Left cardiac atrium (tissue), 4 donors: ENCODE measurements at regions of chr11 and their contacts with region 1.

Region 1: DNA sequence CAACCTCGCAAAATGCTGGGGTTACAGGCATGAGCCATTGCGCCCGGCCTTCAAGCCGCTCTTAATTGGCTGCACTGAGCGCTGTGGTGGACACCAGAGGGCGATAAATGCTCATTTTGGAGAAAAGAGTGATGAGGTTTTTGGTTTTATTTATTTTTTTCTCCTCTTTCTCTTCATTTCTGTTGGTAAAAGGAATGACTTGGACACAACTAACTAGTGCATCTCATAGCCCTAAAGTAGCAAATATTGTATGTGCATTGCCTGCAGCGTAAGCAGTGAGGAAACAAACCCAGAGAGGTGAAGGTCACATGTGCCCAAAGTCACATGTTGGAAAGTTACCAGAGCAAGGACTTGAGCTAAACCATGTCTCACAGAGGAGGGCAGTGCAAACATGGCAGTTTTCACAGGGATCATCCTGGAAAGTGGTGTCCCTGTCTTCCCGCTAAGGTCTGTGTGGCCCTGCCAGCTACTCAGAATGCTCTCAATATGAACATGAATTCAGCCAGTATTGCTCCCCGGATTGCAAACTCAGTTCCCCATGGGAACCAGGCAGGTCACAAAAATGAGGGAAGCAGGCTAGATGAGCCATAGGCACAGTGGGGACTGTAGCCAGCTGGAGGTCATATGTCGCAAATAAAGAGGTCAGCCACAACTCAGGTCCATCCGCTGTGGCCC is 8.6 kb upstream of the CD82 start:
- DNase-seq: peak; percentile 71
- ATAC-seq: peak; percentile 79 to 87

Region 2: GRCh38 chr11:44326615-44327475 is 230.0 kb before region 1 on chr11:
- intact Hi-C with region 1: no loop called
- DNase-seq: no peak
- ATAC-seq: peak; percentile 29 to 37

Region 3: GRCh38 chr11:44600839-44601383 is 44.0 kb after region 1 on chr11:
- intact Hi-C with region 1: no loop called
- DNase-seq: no peak
- ATAC-seq: peak in 1 of 2 donors; percentile 34

Region 4: GRCh38 chr11:44611687-44612434 is 55.0 kb after region 1 on chr11:
- intact Hi-C with region 1: loop called (anchors 1 to 2 kb)
- DNase-seq: no peak
- ATAC-seq: peak in 1 of 2 donors; percentile 11